Right cardiac atrium (tissue), 5 donors: ENCODE measurements at regions of chr14 and their contacts with region 1.

Region 1: DNA sequence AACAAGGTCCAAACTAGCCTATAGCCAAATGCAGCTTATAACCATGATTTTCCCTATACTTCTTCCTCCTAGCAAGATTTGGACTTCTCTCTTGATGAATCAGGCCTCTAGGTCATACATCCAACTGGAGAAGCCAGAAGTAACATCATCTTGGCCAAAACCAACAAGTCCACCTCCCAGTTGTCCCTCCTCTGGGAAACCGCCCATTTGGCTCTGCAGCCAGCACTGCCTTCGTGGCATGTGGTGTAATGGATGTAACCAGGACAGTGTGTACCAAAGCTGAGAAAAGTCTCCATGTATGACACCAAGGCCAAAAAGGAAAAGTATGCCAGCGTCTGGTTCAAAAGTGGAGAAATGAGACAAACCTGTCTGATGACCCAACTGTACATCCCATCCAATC is 59.3 kb upstream of the VASH1 start:
- DNase-seq: peak; percentile 89 to 93 (median 92)
- ATAC-seq: peak; percentile 91 to 94
- H3K4me3 ChIP-seq: no peak overlapping the region
- H3K27ac ChIP-seq: peak overlapping the region; percentile 23
- H3K4me1 ChIP-seq: peaks cover 18% of the 10 kb centered on the region
- H3K27me3 ChIP-seq: no peaks in the 10 kb centered on the region

Region 2: DNA sequence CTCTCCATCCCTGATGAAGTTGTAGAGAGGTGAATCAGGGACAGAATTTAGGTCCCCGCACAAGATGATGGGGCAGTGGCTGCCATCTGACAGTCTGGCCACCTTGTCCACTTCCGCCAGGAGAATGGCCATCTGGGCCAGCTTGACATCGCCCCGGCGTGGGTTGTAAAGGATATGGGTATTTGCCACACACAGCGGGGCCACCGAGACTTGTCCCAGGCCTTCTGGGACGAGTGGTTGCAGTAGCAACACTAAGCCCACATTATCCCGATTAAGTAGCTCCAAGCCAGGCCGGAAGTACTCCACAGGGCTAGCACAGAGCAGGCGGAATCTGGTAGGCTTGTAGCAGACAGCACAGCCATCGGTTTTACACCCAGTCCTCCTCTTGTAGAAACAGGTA is 104.5 kb after region 1 on chr14:
- intact Hi-C with region 1: loop called in 1 of 4 experiments (anchors 5 kb)
- DNase-seq: no peak
- ATAC-seq: no peak
- H3K4me3 ChIP-seq: no peak overlapping the region
- H3K27ac ChIP-seq: no peak overlapping the region
- H3K4me1 ChIP-seq: no peaks in the 10 kb centered on the region
- H3K27me3 ChIP-seq: no peaks in the 10 kb centered on the region

Region 3: DNA sequence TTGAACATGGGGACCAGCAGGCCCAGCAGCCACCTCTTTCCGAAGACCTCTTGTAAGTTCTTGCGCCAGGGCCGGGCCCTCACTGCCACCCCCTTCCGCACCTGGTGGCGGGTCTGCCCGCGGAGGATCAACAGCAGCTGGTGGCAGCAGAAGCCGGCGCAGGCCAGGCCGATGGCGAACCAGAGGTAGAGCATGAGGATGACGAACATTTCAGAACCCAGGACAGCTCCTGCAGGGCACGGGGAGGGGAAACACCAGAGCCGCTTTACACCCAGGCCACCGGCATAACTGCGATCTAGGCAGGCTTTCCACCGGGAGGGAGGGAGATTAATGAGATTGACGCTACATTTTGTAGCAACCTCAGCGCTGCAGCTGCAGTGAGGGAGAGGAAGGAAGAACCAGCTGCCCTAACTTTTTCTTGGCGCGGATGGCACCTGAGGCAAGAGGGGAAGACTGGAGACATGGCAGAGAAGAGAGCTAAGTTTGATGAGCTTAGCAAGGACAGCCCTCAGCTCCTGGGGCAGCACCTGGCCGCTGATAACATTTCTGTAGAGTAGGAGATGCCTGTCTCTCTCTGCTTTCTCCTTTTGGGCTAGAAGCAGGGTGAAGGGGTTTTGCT is 431.8 kb after region 1 on chr14:
- intact Hi-C with region 1: no loop called
- DNase-seq: peak; percentile 50 to 80 (median 75)
- ATAC-seq: peak; percentile 70 to 71
- H3K4me3 ChIP-seq: no peak overlapping the region
- H3K27ac ChIP-seq: no peak overlapping the region
- H3K4me1 ChIP-seq: no peaks in the 10 kb centered on the region
- H3K27me3 ChIP-seq: no peaks in the 10 kb centered on the region